Activated naive CD4-positive, alpha-beta T cell treated with anti-CD3 and anti-CD28 coated beads for 36 hours (primary cell): ENCODE measurements at regions of chr14 and their contacts with region 1.

Region 1: GRCh38 chr14:51901475-51902024 is 41.1 kb downstream of the GNG2 start:
- DNase-seq: no peak
- H3K4me3 Mint-ChIP-seq: no peak overlapping the region
- H3K27ac Mint-ChIP-seq: peak overlapping the region; percentile 63
- H3K4me1 Mint-ChIP-seq: peaks cover 69% of the 10 kb centered on the region
- H3K27me3 Mint-ChIP-seq: no peaks in the 10 kb centered on the region

Region 2: GRCh38 chr14:51865953-51866747 is 35.4 kb before region 1 on chr14:
- CTCF ChIA-PET with region 1: interaction called, 9 read pairs
- intact Hi-C with region 1: loop called (anchors 1 kb)
- DNase-seq: no peak
- H3K4me3 Mint-ChIP-seq: no peak overlapping the region
- H3K27ac Mint-ChIP-seq: no peak overlapping the region
- H3K4me1 Mint-ChIP-seq: peaks cover 27% of the 10 kb centered on the region
- H3K27me3 Mint-ChIP-seq: no peaks in the 10 kb centered on the region

Region 3: GRCh38 chr14:51873221-51873893 is 28.2 kb before region 1 on chr14:
- CTCF ChIA-PET with region 1: interaction called, 4 read pairs
- intact Hi-C with region 1: loop called (anchors 1 kb)
- DNase-seq: peak; percentile 79
- H3K4me3 Mint-ChIP-seq: peak overlapping the region; percentile 34
- H3K27ac Mint-ChIP-seq: peak overlapping the region; percentile 84
- H3K4me1 Mint-ChIP-seq: peaks cover 66% of the 10 kb centered on the region
- H3K27me3 Mint-ChIP-seq: no peaks in the 10 kb centered on the region

Region 4: DNA sequence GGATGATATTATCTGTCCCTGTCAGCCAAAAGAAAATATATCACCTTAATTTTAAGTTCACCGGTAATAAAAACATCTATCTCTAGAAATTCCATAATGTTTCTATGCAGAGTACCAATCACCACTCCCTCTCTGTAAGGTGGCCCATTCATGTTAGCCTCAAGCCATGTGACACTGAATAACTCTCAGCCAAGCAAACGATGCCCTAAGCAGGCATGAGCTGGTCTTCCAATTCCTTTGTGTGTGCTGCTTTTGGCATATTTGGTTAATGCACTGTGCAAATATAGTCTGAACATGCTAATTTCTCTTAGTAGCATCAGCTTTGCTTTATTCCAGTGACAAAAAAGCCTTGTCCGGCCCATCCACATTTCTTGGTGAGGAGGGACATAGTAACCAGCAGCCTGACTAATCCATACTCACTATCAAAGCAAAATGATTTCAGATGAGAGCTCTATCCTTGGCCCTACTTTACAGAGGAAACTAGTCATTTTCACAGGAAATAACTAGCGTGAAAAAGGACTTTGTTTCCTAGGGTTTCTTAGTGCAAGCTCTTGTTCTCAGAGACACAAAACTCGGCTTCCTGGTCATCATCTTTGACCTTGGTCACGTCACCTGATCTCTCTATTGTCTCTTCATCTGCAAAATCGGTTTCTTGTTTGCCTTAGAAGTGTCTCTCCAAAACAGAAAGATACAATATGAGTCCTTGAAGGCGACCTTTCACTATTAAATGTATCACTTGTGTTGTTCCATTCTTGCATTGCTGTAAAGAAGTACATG is 28.5 kb after region 1 on chr14:
- CTCF ChIA-PET with region 1: no interaction called
- intact Hi-C with region 1: loop called (anchors 1 kb)
- DNase-seq: no peak
- H3K4me3 Mint-ChIP-seq: no peak overlapping the region
- H3K27ac Mint-ChIP-seq: peak overlapping the region; percentile 20
- H3K4me1 Mint-ChIP-seq: peaks cover 61% of the 10 kb centered on the region
- H3K27me3 Mint-ChIP-seq: no peaks in the 10 kb centered on the region